ENCODE measurements at regions of chr9 and their contacts with region 1.

Region 1: DNA sequence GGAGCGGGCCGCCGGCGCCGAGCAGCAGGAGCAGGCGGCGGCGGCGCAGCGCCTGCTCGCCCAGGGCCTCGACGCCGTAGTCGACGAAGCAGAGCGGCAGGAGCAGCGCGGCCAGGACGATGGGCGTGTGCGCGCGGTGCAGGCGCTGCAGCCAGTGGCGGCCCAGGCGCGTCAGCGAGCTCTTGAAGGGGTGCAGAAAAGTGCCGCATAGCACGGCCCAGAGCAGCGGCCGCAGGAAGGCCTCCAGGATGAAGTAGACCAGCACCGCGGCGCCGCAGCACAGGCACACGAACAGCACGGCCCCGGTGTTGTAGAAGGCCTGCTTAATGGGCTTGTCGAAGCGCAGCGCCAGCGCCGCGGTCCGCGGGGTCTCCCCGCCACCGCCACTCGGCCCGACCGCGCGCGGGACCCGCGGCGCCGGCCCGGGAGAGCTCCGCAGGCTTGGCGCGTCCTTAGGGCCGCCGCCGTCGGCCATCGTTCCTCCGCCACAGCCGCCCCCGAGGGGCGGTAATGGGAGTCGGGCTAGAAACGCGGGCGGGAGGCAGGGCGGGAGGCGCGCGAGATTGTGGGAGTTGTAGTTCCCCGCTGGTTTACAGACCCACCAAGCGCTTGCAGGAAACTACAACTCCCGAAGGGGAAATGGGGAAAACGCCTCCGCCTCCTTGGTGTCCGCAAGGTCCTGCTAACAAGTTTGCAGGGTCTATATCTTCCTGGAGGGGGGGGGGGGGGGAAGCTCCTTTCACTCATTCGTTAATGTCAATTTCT is at the start of gene TMEM245:
- DNase-seq: peak; percentile 96
- ATAC-seq: peak; percentile 98
- total RNA-seq, gene TMEM245: 95.1 TPM

Region 2: GRCh38 chr9:109063760-109064159 is 55.9 kb before region 1 on chr9:
- intact Hi-C with region 1: no loop called
- DNase-seq: no peak
- ATAC-seq: no peak

Region 3: DNA sequence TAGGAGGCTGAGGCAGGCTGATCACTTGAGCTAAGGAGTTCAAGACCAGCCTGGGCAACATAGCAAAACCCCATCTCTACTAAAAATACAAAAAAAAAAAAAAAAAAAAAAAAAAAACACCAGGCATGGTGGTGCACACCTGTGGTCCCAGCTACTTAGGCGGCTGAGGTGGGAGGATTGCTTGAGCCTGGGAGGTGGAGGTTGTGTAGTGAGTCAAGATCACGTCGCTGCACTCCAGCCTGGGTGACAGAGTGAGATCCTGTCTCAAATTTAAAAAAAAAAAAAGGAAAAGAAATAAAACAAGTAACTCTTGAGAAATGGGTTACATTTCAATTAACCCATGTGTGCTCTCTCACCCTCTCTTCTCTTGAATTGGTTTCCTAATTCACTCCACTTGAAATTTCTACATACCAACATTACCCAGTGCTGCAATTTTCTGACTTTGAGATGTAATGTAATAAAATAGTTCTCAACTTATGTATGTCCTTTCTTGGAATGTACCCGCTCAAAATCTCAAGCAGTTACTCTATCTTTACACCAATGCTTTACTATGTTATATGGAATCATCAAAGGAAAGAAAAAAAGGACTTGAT is 35.7 kb before region 1 on chr9:
- intact Hi-C with region 1: loop called (anchors 5 kb)
- DNase-seq: no peak
- ATAC-seq: no peak

Region 4: DNA sequence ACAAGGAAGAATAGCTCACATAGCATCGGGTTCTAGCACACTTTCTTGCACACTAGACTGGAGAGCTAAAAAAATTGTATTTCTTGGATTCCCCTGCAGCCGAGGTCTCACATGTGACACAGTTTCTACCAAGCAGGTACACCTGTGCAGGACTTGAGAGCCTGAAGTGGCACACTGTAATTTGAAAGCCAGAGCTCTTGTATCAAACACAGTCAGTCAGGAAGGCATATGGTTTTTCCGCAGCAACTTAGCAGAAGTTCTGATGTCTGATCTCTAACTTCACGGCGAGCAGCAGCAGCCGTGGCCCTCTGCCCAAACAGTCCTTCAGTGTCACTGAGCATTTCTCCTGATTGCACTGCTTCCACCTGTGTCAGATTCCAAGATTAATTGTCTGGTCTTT is 25.4 kb before region 1 on chr9:
- intact Hi-C with region 1: loop called (anchors 2 kb)
- DNase-seq: no peak
- ATAC-seq: no peak

Measured in Right ventricle myocardium inferior (tissue), 1 donor.